Caco-2 (cell line): ENCODE measurements at regions of chr9 and their contacts with region 1.

Region 1: DNA sequence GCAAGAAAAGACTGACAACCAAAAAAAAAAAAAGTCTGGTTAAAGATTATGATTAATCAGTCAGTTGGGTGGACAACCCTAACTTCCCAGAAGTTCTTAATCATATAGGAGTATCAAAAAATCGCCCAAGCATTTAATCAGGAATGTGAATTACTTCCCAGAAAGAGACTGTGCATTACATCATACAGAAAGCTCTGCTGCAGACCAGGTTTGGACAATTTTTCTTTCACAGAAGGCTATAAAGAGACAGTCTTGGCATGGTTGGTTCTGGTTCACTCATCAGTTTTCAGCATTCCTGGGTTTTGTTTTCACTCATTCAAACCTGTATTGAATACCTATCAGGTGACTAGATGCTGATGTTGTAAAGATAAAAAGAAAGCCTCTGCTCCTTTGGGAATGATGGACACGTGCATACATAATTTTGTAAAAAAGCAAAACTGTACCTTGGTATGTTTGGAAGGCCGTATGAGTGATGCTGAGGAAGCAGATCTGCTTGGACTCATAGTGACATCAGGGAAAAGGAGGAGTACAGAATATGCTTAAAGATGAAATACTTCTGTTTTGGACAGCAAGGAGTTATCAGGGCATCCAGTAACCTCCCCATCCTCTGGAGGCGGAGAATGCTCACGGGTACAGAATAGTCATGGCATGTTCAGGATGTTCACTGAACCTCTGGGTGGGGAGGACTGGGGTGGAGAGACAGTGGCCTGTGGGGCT is 178.4 kb downstream of the GNA14 start:
- DNase-seq: no peak
- H3K4me3 ChIP-seq: no peak overlapping the region
- H3K4me3 Mint-ChIP-seq: no peak overlapping the region
- H3K27ac Mint-ChIP-seq: no peak overlapping the region
- H3K4me1 ChIP-seq: no peaks in the 10 kb centered on the region
- H3K4me1 Mint-ChIP-seq: no peaks in the 10 kb centered on the region
- H3K27me3 ChIP-seq: no peaks in the 10 kb centered on the region
- H3K27me3 Mint-ChIP-seq: no peaks in the 10 kb centered on the region
- CTCF ChIP-seq: no peak

Region 2: DNA sequence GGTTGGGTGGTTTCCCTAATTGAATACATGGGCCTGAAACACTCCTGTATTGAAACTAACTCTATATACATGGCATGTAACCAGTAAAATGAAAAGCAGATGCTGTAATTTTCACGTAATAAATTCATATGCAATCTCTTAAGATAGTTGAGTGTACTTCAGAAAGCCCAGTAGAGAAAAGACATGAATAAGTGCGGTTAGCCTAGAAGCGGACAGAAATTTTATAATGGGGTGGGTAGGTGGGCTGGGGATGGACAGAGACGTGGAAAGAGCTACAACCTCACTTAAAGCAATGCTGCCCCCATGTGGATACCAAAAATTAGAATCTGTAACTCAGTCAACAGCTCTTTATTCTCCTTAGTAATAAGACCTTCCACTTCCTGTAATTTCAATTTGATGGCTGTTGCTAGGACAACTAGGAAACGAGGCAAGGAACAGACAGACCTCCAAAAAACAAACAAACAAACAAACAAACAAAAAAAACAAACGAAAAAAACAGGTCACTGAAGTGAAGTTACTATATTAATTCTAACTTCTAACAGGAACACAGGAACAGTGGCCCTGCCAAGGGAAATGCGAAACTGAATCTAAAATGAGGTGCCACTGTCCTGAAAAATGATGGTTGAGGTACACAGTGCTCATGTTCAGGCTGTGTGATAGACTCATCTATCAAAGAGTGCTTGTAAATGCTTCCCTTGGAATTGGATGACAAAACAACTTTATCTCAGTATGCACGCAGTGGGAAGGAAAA is 281.8 kb after region 1 on chr9:
- CTCF ChIA-PET with region 1: no interaction called
- POLR2A ChIA-PET with region 1: no interaction called
- intact Hi-C with region 1: loop called (anchors 10 kb)
- DNase-seq: peak in 1 of 2 experiments; percentile 5
- H3K4me3 ChIP-seq: no peak overlapping the region
- H3K4me3 Mint-ChIP-seq: no peak overlapping the region
- H3K27ac Mint-ChIP-seq: no peak overlapping the region
- H3K4me1 ChIP-seq: no peaks in the 10 kb centered on the region
- H3K4me1 Mint-ChIP-seq: no peaks in the 10 kb centered on the region
- H3K27me3 ChIP-seq: no peaks in the 10 kb centered on the region
- H3K27me3 Mint-ChIP-seq: no peaks in the 10 kb centered on the region
- CTCF ChIP-seq: no peak

Region 3: GRCh38 chr9:77935974-77936373 is 466.3 kb after region 1 on chr9:
- CTCF ChIA-PET with region 1: no interaction called
- POLR2A ChIA-PET with region 1: no interaction called
- intact Hi-C with region 1: no loop called
- DNase-seq: no peak
- H3K4me3 ChIP-seq: no peak overlapping the region
- H3K4me3 Mint-ChIP-seq: no peak overlapping the region
- H3K27ac Mint-ChIP-seq: no peak overlapping the region
- H3K4me1 ChIP-seq: no peaks in the 10 kb centered on the region
- H3K4me1 Mint-ChIP-seq: peaks cover 5% of the 10 kb centered on the region
- H3K27me3 ChIP-seq: no peaks in the 10 kb centered on the region
- H3K27me3 Mint-ChIP-seq: no peaks in the 10 kb centered on the region
- CTCF ChIP-seq: no peak